H1 (cell line): ENCODE measurements at regions of chr14 and their contacts with region 1.

Region 1: DNA sequence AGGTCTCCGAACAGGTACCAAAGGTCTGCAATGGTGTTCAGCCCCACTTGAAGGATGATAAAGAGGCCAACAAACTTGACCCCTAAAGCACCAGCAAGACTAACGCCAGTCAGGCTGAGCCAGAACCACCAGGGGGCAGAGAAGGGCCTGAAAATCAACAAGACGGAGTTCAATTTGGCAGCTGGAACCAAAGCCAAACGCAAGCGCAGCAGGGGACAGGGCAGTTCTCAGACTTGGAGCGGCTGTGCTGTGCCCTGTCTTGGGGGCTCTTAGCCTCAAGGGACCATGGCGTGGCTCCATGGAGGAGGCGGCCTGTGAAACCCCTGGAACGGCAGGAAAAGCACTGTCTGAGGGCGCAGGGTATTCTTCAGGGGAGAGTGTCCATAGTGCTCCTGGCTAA is 19.6 kb downstream of the POMT2 start:
- DNase-seq: peak; percentile 83 to 90
- H3K4me3 ChIP-seq: no peak overlapping the region
- H3K27ac ChIP-seq: no peak overlapping the region
- H3K4me1 ChIP-seq: peaks cover 0 to 5% (median 0%) of the 10 kb centered on the region in 4 experiments; a peak in 1 of 7 replicates
- H3K27me3 ChIP-seq: no peaks in the 10 kb centered on the region
- CTCF ChIP-seq: peak; percentile 81 to 98 (median 91)
- EP300 ChIP-seq: no peak
- POLR2A ChIP-seq: no peak
- RAD21 ChIP-seq: peak; percentile 87 to 95

Region 2: DNA sequence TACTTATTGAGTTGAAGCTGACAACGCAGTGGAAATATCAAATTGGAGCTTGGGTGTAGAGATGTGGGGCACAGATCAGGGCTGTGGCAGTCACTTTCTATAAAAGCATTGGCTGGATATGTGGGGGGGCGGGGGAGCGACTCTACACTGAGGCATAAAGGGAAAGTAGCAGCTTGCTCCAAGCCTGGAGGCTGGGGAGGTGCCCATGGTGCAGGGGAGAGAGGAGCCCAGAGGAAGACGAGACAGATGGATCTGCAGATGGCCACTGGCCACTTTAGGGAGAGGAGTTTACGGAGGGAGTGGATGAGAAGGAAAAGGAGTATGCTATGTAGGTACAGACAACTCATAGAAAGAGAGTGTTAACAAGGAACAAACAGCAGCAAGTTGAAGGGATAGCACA is 16.6 kb before region 1 on chr14:
- CTCF ChIA-PET with region 1: interaction called, 26 read pairs
- POLR2A ChIA-PET with region 1: interaction called, 3 read pairs
- DNase-seq: no peak
- H3K4me3 ChIP-seq: no peak overlapping the region
- H3K27ac ChIP-seq: no peak overlapping the region
- H3K4me1 ChIP-seq: no peaks in the 10 kb centered on the region
- H3K27me3 ChIP-seq: no peaks in the 10 kb centered on the region
- CTCF ChIP-seq: no peak
- EP300 ChIP-seq: no peak
- POLR2A ChIP-seq: no peak
- RAD21 ChIP-seq: no peak

Region 3: GRCh38 chr14:77290741-77291140 is 10.4 kb before region 1 on chr14:
- CTCF ChIA-PET with region 1: interaction called, 26 read pairs
- POLR2A ChIA-PET with region 1: no interaction called
- DNase-seq: no peak
- H3K4me3 ChIP-seq: no peak overlapping the region
- H3K27ac ChIP-seq: no peak overlapping the region
- H3K4me1 ChIP-seq: no peaks in the 10 kb centered on the region
- H3K27me3 ChIP-seq: no peaks in the 10 kb centered on the region
- CTCF ChIP-seq: peak; percentile 27 to 49 (median 45)
- EP300 ChIP-seq: no peak
- POLR2A ChIP-seq: no peak
- RAD21 ChIP-seq: peak; percentile 11 to 44; a peak in 2 of 4 replicates

Region 4: DNA sequence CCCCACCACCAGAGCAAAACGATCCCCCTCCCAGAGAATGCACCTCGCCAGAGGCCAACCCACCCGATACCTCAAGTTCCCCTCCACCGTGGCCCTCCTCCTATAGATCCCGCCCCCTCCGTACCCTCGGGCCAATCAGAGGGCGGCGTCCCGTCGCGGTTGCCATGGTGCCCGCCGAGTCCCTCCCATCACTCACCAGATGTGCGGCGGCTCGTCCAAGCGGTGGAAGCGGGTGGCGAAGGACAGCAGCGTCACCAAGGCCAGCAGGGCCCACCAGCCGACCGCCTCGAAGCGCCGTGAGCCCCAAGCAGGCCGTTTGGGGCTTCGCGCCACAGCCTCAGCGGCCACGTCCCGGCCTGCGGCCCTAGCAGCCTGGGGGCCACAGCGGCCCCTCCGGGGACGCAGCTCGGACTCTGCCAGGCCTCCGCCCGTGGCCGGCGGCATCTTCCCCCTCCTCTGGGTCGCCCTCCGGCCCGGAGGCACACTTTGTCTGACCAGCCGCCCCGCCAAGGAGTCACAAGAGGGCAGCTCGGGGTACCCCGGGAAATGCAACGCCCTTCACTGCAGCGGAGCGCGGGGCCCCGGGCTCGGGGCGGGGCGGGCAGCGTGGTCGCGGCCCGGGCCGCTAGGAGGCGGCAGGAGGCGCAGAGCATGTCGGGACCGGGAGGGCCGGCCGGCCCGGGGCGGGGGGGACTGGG is 19.3 kb after region 1 on chr14 and contains the start of gene POMT2:
- CTCF ChIA-PET with region 1: interaction called, 353 read pairs
- POLR2A ChIA-PET with region 1: interaction called, 7 read pairs
- DNase-seq: peak; percentile 84 to 98
- H3K4me3 ChIP-seq: peak within 1 kb of the TSS; percentile 63 to 93 (median 91)
- H3K27ac ChIP-seq: peak within 1 kb of the TSS; percentile 94
- H3K4me1 ChIP-seq: peaks cover 4 to 18% (median 9%) of the 10 kb centered on the region in 4 experiments; a peak in 6 of 7 replicates
- H3K27me3 ChIP-seq: no peaks in the 10 kb centered on the region
- CTCF ChIP-seq: peak; percentile 26 to 48 (median 35); a peak in 3 of 4 replicates
- EP300 ChIP-seq: no peak
- POLR2A ChIP-seq: peak in 1 of 2 experiments; percentile 57; a peak in 2 of 3 replicates
- RAD21 ChIP-seq: 0 out of 4 replicates have a peak, but pooled peaks of 1 of the 2 experiments have one; percentile 3
- total RNA-seq, gene POMT2: 41.2 and 44.9 TPM in 2 replicates

Region 5: DNA sequence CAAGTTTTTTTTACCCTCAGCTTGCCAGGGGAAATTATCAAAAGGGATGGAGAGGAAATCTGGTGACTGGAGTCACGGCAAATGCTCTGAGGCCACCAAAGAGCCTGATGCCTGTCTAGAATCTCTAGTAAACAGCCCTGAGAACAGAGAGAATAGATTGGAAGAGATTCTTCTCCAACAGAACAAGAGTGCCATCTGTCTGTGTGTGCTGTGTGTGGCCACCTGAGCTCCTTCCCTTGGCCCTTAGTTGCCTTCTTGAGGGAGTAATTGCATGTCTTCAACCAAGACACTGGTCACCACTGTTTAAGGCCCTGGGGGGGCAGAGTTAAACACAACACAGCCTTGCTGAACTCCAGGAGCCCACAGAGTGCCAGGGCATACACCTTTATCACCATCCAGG is 25.1 kb after region 1 on chr14:
- CTCF ChIA-PET with region 1: interaction called, 29 read pairs
- POLR2A ChIA-PET with region 1: interaction called, 7 read pairs
- DNase-seq: no peak
- H3K4me3 ChIP-seq: no peak overlapping the region
- H3K27ac ChIP-seq: no peak overlapping the region
- H3K4me1 ChIP-seq: peaks cover 4 to 11% (median 7%) of the 10 kb centered on the region in 4 experiments; a peak in 6 of 7 replicates
- H3K27me3 ChIP-seq: no peaks in the 10 kb centered on the region
- CTCF ChIP-seq: no peak
- EP300 ChIP-seq: no peak
- POLR2A ChIP-seq: no peak
- RAD21 ChIP-seq: peak in 1 of 2 experiments; percentile 21; a peak in 1 of 4 replicates